Right cardiac atrium (tissue), 5 donors: ENCODE measurements at regions of chr17 and their contacts with region 1.

Region 1: GRCh38 chr17:3870871-3871306 is 22.0 kb downstream of the CAMKK1 start:
- DNase-seq: peak; percentile 77 to 90 (median 89)
- ATAC-seq: peak; percentile 86 to 90
- H3K4me3 ChIP-seq: no peak overlapping the region
- H3K27ac ChIP-seq: peak overlapping the region; percentile 84
- H3K4me1 ChIP-seq: peaks cover 2% of the 10 kb centered on the region
- H3K27me3 ChIP-seq: no peaks in the 10 kb centered on the region

Region 2: DNA sequence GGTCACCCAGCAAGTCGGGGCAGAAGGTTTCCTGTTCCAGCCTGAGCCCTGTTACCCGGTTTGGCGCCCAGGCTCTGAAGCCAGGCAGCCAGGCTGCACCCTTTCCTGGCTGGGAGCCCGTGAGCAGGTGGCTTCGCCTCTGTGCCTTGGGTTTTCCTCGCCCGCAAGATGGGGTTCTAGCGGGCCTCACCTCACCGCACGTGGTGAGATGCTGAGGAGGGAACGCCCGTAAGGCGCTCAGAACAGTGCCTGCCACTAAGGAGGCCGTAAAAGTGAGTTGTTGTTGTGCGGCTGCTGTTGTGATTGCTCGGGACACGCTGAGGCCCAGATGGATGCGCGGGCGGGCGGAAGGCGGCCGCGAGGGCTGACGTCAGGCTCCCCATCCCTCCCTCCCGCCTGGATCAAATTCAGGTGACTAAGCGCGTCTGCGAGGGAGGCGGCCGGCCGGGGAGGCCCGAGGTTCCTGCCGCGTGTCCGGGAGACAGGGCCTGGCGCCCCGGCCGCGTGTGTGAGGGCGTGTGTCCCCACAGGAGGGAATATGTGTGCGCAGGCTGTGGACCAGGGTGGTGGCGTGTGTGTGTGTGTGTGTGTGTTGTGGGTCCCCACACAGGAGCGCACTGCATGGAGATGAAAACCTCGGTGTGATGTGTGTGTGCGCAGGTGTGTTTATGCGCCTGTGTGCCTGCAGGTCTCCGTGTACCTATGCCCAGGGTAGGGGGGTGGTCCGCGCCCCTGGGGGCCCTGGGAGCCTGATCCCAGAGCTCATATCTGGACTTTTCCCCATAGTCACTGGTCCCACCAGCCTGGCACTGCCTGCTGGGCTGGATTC is 17.7 kb after region 1 on chr17:
- intact Hi-C with region 1: no loop called
- DNase-seq: peak; percentile 87 to 93 (median 91)
- ATAC-seq: peak; percentile 28 to 36
- H3K4me3 ChIP-seq: no peak overlapping the region
- H3K27ac ChIP-seq: peak overlapping the region; percentile 34
- H3K4me1 ChIP-seq: peaks cover 6% of the 10 kb centered on the region
- H3K27me3 ChIP-seq: no peaks in the 10 kb centered on the region

Region 3: DNA sequence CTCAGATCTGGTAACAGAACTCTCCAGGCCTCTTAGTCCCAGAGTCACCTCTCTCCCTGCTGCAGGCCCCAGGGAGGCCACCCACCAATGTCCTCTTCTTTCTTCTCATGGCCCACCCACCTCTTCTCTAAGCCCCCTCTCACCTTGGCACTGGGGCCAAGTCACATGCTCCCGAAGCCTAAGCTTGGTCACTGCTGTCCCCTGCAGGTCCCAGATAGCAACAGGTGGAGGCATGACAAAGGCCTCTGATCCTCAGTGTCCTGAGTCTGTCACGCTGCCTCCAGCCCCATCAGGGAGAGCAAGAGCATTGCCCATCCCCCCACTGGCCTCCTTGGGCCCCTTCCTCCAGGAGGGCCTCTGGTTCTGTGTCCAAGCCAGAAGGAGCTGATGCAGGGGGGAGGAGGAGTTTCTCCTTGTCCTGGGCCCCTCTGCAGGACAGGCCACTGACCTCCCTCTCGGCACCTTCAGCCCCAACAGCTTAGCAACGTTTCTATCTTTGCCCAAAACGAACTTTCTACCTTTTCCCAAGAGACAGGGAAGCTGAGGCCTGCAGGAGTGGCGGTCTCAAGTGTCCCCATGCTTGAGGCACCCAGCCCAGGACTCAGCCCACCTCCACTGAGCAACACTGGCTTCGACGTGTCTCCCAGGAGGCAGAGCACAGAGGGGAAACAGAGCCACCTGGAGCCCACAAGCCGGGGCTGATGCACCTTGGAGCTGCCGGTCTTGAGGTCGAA is 36.8 kb after region 1 on chr17:
- intact Hi-C with region 1: loop called in 3 of 4 experiments (anchors 5 kb)
- DNase-seq: no peak
- ATAC-seq: no peak
- H3K4me3 ChIP-seq: no peak overlapping the region
- H3K27ac ChIP-seq: no peak overlapping the region
- H3K4me1 ChIP-seq: peaks cover 2% of the 10 kb centered on the region
- H3K27me3 ChIP-seq: no peaks in the 10 kb centered on the region